CD14-positive monocyte (primary cell): ENCODE measurements at regions of chr7 and their contacts with region 1.

Region 1: DNA sequence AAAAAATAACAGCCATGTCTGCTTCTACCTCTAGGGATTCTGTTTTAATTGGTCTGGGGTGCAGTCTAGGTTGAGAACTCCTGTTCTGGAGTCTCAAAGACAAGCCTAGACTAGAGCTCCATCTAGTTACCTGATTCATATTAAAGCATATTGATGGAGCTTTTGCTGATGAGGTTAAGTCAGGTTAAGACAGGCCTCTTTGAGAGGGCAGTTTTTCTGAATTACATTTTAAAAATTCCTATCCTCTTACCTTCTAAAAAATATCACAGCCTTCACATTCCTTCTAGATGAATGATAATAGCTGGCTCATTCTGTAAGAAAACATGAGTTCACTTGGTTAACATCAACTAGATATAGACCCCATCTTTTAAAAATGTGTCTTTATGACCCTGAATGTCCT is 28.9 kb downstream of the MGAM start:
- DNase-seq: no peak
- H3K4me3 ChIP-seq: no peak overlapping the region
- H3K4me3 Mint-ChIP-seq: no peak overlapping the region
- H3K27ac ChIP-seq: no peak overlapping the region
- H3K27ac Mint-ChIP-seq: no peak overlapping the region
- H3K4me1 ChIP-seq: no peaks in the 10 kb centered on the region
- H3K4me1 Mint-ChIP-seq: no peaks in the 10 kb centered on the region
- H3K27me3 ChIP-seq: no peaks in the 10 kb centered on the region
- H3K27me3 Mint-ChIP-seq: peaks cover 0 to 3% (median 2%) of the 10 kb centered on the region in 3 donors
- CTCF ChIP-seq: no peak

Region 2: GRCh38 chr7:141763797-141764196 is 260.8 kb before region 1 on chr7 and contains the start of gene TAS2R3:
- intact Hi-C with region 1: loop called in 1 of 2 experiments (anchors 10 kb)
- DNase-seq: no peak
- H3K4me3 ChIP-seq: no peak within 1 kb of the TSS
- H3K4me3 Mint-ChIP-seq: no peak within 1 kb of the TSS
- H3K27ac ChIP-seq: no peak within 1 kb of the TSS
- H3K27ac Mint-ChIP-seq: peak within 1 kb of the TSS in 1 of 7 donors; percentile 66
- H3K4me1 ChIP-seq: no peaks in the 10 kb centered on the region
- H3K4me1 Mint-ChIP-seq: peaks cover 11% of the 10 kb centered on the region
- H3K27me3 ChIP-seq: no peaks in the 10 kb centered on the region
- H3K27me3 Mint-ChIP-seq: no peaks in the 10 kb centered on the region
- CTCF ChIP-seq: no peak
- polyA plus RNA-seq, gene TAS2R3: not detected

Region 3: DNA sequence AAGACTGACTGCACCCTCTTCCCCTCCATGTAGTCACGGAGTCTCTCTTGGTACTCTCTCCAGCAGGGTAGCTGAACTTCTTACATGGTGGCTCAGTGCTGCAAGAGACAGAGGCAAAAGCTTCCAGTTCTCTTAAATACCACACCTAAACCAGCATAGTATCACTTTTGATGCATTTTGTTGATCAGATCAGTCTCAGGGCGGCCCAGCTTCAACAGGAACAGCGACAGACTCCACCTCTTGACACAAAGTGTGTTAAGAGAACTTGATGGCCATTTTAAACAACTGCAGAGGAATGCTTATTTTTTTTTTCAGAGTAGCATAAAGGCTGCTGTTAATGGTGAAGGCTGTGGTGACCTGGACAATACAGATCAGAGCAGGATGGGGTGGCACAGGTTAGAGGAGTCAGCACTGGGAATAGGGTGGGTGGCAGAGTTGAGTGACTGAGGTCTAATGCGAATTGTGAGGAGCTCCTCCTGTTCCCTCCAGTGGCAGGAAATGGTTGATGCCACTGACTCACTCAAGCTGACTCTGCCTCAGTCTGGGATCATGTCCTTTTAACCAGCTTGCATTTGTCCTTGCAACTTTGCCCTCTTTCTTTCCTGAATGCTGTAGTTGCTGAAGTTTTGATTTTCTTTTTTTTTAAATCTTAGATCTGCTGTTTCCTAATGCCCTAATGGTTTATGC is 11.6 kb before region 1 on chr7:
- intact Hi-C with region 1: no loop called
- DNase-seq: peak; percentile 18 to 50 (median 49)
- H3K4me3 ChIP-seq: no peak overlapping the region
- H3K4me3 Mint-ChIP-seq: no peak overlapping the region
- H3K27ac ChIP-seq: no peak overlapping the region
- H3K27ac Mint-ChIP-seq: peak overlapping the region in 3 of 7 donors; percentile 21 to 79 (median 25)
- H3K4me1 ChIP-seq: peaks cover 4 to 10% of the 10 kb centered on the region in 2 donors
- H3K4me1 Mint-ChIP-seq: peaks cover 10% of the 10 kb centered on the region
- H3K27me3 ChIP-seq: no peaks in the 10 kb centered on the region
- H3K27me3 Mint-ChIP-seq: peaks cover 0 to 2% (median 0%) of the 10 kb centered on the region in 3 donors
- CTCF ChIP-seq: peak; percentile 27

Region 4: GRCh38 chr7:142066536-142066935 is 42.0 kb after region 1 on chr7:
- intact Hi-C with region 1: no loop called
- DNase-seq: no peak
- H3K4me3 ChIP-seq: no peak overlapping the region
- H3K4me3 Mint-ChIP-seq: no peak overlapping the region
- H3K27ac ChIP-seq: no peak overlapping the region
- H3K27ac Mint-ChIP-seq: peak overlapping the region in 1 of 7 donors; percentile 67
- H3K4me1 ChIP-seq: peaks cover 2 to 6% of the 10 kb centered on the region in 2 donors
- H3K4me1 Mint-ChIP-seq: peaks cover 24% of the 10 kb centered on the region
- H3K27me3 ChIP-seq: no peaks in the 10 kb centered on the region
- H3K27me3 Mint-ChIP-seq: peaks cover 0 to 5% (median 0%) of the 10 kb centered on the region in 3 donors
- CTCF ChIP-seq: no peak